ENCODE measurements at regions of chr1 and their contacts with region 1.

Region 1: GRCh38 chr1:92858564-92859399 is 26.9 kb downstream of the RPL5 start:
- DNase-seq: peak; percentile 89
- H3K4me3 ChIP-seq: peak overlapping the region; percentile 24; the same call in 1 of the 2 replicates
- H3K27ac ChIP-seq: no peak overlapping the region
- H3K4me1 ChIP-seq: no peaks in the 10 kb centered on the region
- H3K27me3 ChIP-seq: no peaks in the 10 kb centered on the region

Region 2: DNA sequence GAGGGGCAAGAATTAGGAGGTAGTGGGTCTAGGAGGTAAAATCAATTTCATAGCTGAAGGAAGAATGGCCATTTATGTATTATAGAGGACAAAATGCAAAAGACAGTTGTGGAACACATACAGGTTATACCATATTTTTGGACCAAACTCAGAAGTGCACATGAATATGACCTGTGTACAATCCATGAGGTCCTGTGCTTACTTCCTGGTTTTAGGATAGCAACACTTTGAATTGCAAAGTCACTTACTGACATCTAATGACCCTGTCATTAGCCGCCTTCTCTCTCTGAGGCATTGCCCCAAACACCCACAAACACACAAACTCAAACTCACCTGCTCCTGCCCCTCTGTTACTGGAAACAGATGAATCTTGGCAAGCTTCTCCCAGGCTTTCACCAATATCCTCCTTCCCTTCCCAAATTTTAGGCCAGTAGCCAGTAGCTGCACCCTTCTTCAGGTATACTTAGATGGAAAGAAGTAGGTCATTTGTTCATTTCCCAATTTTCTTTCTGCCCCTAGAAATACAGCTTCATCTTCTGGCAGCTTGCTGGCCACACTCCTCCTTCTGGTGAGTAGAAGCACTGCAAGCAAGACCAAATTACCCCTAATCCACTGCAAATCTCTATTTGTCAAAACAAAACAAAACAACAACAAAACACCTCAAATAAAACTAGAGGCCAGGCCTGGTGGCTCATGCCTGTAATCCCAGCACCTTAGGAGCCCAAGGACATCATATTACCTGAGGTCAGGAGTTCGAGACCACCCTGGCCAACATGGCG is 40.6 kb before region 1 on chr1:
- in situ Hi-C with region 1: no loop called
- DNase-seq: peak; percentile 66
- H3K4me3 ChIP-seq: no peak overlapping the region
- H3K27ac ChIP-seq: no peak overlapping the region
- H3K4me1 ChIP-seq: peaks cover 10% of the 10 kb centered on the region; the same call in 1 of the 2 replicates
- H3K27me3 ChIP-seq: no peaks in the 10 kb centered on the region

Region 3: DNA sequence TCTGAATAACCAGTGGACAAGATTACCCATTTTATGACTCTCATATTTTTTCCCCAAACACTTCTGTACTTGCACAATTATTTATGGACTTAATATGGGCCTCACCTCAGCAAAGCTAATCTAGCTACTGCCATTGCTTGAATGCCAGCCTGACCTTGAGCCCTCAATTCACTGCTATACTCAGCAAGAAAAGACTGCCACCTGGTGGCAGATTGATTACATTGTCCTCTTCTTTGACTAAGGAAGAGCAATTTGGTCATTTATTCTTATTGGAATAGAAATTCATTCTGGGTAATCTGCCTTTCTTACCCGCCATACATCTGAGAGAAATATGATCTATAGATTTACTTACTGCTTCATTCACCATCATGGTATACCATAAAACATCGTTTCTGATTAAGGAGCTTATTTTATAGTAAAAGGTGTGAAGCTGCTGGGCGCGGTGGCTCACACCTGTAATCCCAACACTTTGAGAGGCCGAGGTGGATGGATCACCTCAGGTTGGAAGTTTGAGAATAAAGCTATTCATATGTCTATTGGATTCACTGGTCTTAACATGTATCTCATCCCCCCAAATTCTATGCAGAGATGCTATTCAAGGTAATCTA is 135.4 kb after region 1 on chr1:
- in situ Hi-C with region 1: loop called (anchors 5 kb)
- DNase-seq: peak; percentile 87
- H3K4me3 ChIP-seq: no peak overlapping the region
- H3K27ac ChIP-seq: no peak overlapping the region
- H3K4me1 ChIP-seq: peaks cover 2% of the 10 kb centered on the region; the same call in 1 of the 2 replicates
- H3K27me3 ChIP-seq: no peaks in the 10 kb centered on the region

Measured in GM23248 (cell line).